Activated CD4-positive, alpha-beta T cell treated with anti-CD3 and anti-CD28 coated beads for 36 hours (primary cell): ENCODE measurements at regions of chr11 and their contacts with region 1.

Region 1: DNA sequence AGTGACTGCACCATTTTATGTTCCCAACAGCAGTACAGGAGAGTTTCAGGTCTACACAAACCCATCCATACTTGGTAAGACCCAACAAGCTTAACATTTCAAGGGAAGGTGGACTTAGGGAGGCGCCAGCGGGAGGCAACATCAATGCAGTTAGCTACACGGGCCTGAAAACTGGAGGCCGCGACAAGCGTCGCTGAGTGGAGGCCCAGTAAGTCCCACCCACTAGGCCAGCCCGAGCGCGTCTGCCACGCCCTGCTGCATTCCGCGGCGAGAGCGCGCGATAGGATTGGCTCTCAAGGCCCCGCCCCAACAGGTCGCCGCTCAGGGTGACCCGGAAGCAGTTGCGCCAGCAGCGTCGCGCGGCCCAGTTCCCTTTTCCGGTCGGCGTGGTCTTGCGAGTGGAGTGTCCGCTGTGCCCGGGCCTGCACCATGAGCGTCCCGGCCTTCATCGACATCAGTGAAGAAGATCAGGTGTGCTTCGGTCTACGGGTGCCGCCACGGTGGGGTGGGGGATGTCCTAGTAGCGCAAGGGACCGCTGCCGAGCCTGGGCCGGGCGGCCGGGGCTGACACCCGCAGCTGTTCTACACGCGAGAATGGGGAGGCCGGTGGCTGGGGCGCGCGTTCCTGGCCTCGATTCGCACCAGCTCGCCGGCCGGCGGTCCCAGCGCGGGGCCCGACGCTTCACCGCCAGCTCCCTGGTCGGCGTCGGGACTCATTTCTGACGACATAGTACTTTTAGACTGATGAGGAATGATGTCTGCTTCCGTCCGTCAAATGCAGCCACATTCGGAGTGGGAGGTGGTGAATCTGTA is at the start of gene EIF3M:
- DNase-seq: peak; percentile 98
- ATAC-seq: peak; percentile 99
- H3K4me3 Mint-ChIP-seq: peak within 1 kb of the TSS; percentile 87
- H3K27ac Mint-ChIP-seq: peak within 1 kb of the TSS; percentile 96
- H3K4me1 Mint-ChIP-seq: peaks cover 39% of the 10 kb centered on the region
- H3K27me3 Mint-ChIP-seq: no peaks in the 10 kb centered on the region
- total RNA-seq, gene EIF3M: 392 to 408 TPM

Region 2: DNA sequence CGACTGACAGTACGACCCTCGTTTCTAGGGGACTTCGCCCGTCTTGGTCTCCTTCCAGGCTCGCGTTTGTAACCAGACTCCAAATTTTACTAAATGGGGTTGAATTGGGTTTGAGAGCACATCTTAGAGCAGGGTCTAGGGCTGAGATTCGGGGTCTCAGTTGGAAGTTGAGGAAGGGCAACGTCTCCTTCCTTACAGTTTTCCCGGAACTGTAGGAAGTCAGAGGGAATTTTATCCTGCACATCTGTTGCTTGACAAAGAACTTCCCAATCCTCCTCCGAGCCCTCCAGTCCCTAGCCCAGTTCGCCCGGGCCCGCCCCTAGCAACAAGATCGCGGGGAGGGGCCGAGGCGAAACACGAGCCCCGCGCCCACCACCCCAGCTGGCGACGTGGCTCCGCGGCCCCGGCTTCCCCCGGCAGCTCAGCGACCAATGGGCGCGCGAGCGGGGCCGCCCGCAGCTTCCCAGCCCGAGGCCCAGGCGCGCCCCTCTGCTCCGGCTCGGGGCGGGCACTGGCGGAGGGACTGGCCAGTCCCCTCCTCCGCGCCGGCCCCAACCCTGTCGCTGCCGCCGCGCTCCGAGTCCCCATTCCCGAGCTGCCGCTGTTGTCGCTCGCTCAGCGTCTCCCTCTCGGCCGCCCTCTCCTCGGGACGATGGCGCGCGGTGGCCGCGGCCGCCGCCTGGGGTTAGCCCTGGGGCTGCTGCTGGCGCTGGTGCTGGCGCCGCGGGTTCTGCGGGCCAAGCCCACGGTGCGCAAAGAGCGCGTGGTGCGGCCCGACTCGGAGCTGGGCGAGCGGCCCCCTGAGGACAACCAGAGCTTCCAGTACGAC is 492.9 kb before region 1 on chr11 and contains the start of gene RCN1:
- CTCF ChIA-PET with region 1: no interaction called
- POLR2A ChIA-PET with region 1: no interaction called
- intact Hi-C with region 1: loop called in 1 of 2 experiments (anchors 5 kb)
- DNase-seq: peak; percentile 62
- ATAC-seq: peak; percentile 59
- H3K4me3 Mint-ChIP-seq: peak within 1 kb of the TSS; percentile 79
- H3K27ac Mint-ChIP-seq: peak within 1 kb of the TSS; percentile 85
- H3K4me1 Mint-ChIP-seq: peaks cover 43% of the 10 kb centered on the region
- H3K27me3 Mint-ChIP-seq: peaks cover 10% of the 10 kb centered on the region
- total RNA-seq, gene RCN1: 19.1 to 24.1 TPM

Region 3: GRCh38 chr11:32594272-32594671 is 10.6 kb after region 1 on chr11:
- CTCF ChIA-PET with region 1: interaction called, 3 read pairs
- POLR2A ChIA-PET with region 1: interaction called, 3 read pairs
- intact Hi-C with region 1: loop called in 1 of 2 experiments (anchors 1 kb)
- DNase-seq: no peak
- ATAC-seq: peak; percentile 54
- H3K4me3 Mint-ChIP-seq: no peak overlapping the region
- H3K27ac Mint-ChIP-seq: no peak overlapping the region
- H3K4me1 Mint-ChIP-seq: peaks cover 36% of the 10 kb centered on the region
- H3K27me3 Mint-ChIP-seq: no peaks in the 10 kb centered on the region

Region 4: DNA sequence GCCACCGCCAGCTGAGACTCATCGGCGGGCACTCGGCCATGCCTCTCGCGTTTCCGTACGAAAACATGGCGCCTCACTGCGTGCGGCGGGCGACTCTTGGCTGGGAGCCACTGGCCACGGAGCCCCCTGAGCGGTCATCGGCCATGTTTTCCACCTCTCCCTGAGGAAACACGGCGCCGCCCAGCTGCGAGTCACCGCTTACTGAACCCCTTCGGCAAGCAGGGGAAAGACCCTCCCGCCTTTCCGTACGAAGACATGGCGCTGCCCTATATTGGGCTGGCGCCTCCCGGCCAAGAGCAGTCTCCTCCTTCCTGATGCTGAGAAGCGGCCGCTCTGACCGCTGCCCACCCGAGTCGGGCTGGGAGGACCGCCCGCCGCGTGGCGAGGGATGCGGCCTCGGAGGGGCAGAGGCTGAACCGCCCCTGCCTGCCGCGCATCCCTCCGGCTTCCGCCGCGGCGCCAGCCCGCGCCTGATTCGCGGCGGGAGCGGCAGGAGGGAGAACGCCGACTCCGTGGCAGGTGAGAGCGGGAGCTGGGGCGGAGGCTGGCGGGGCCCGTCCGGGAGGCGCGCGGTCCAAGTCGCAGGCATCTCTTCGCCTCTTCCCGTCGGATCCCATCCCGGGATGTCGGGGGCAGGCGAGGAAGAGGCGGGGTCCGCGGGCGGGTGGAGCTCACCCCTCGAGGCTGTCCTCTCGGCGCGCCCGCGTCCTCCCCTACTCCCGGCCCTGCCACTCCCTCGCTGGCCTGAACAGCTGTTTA is 455.8 kb after region 1 on chr11 and contains the start of gene TCP11L1:
- CTCF ChIA-PET with region 1: no interaction called
- POLR2A ChIA-PET with region 1: no interaction called
- intact Hi-C with region 1: loop called in 1 of 2 experiments (anchors 1 kb)
- DNase-seq: peak; percentile 89
- ATAC-seq: peak; percentile 71
- H3K4me3 Mint-ChIP-seq: peak within 1 kb of the TSS; percentile 87
- H3K27ac Mint-ChIP-seq: peak within 1 kb of the TSS; percentile 95
- H3K4me1 Mint-ChIP-seq: peaks cover 37% of the 10 kb centered on the region
- H3K27me3 Mint-ChIP-seq: peaks cover 5% of the 10 kb centered on the region
- total RNA-seq, gene TCP11L1: 7.9 to 8.8 TPM

Region 5: DNA sequence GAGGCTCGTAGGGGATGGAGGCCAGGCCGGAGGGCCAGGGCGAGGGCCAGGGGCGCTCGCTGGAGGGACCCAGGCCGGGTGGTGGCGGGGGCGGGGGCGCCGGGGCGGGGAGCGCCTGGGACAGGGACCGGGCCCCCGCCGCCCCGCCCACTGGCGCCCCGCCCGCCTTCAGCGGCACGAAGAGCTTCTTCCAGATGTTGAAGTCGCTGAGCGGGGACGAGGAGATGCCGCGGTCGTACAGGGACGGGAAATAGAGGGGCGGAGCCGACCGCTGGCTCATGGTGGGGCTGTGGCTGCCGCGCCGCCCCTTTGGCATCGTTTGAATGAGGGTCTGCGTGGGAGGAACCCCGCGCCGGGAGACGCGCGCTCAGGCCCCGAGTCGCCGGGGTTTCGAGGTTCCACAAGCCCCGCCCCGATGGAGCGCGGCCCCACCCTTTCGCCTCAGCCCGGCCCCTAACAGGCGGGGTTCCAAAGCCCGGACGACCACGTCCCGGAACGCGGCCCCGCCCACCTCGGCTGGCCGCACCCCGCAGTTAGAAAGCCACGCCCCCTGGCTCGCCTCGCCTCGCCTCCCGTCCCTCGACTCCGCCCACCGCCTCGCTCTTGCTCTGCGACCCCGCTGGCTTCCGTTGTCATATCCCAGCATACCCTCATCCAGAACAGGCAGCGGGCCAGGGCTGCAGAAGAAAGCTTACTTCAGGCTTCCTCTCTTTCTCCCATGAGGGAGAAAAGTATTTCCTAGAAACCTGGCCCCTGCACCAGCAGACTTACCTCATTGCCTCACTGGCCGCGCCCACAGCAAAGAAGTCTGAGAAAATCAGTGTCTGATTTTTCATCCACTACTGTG is 1117.0 kb after region 1 on chr11 and contains the start of gene C11orf91:
- CTCF ChIA-PET with region 1: no interaction called
- POLR2A ChIA-PET with region 1: no interaction called
- intact Hi-C with region 1: loop called in 1 of 2 experiments (anchors 5 kb)
- DNase-seq: peak; percentile 94
- ATAC-seq: peak; percentile 93
- H3K4me3 Mint-ChIP-seq: peak within 1 kb of the TSS; percentile 74
- H3K27ac Mint-ChIP-seq: peak within 1 kb of the TSS; percentile 45
- H3K4me1 Mint-ChIP-seq: peaks cover 18% of the 10 kb centered on the region
- H3K27me3 Mint-ChIP-seq: peaks cover 16% of the 10 kb centered on the region
- total RNA-seq, gene C11orf91: not detected